PC-9 (cell line): ENCODE measurements at regions of chr1 and their contacts with region 1.

Region 1: DNA sequence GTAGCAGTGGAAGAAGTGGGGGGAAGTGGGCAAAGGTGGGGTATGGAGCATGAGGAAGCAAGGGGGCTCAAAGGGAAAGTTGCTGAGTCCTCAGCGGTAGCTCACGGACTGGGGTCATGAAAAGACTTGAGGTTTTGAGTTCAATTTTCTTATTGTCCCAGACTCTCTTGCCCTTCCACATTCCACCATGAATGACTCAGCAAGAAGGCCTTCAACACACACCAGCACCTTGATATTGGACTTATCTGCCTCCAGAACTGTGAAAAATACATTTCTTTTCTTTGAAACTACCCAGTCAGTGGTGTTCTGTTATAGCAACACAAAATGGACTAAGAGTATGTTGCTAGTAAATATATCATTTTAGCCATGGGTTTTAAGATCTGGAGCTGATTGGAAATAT is 17.3 kb upstream of the RHBDL2 start:
- DNase-seq: peak; percentile 71 to 92
- H3K4me3 ChIP-seq: peak overlapping the region; percentile 23; the same call in 1 of the 2 replicates
- H3K27ac ChIP-seq: peak overlapping the region; percentile 95
- H3K4me1 ChIP-seq: peaks cover 55% of the 10 kb centered on the region
- H3K27me3 ChIP-seq: no peaks in the 10 kb centered on the region
- CTCF ChIP-seq: no peak

Region 2: DNA sequence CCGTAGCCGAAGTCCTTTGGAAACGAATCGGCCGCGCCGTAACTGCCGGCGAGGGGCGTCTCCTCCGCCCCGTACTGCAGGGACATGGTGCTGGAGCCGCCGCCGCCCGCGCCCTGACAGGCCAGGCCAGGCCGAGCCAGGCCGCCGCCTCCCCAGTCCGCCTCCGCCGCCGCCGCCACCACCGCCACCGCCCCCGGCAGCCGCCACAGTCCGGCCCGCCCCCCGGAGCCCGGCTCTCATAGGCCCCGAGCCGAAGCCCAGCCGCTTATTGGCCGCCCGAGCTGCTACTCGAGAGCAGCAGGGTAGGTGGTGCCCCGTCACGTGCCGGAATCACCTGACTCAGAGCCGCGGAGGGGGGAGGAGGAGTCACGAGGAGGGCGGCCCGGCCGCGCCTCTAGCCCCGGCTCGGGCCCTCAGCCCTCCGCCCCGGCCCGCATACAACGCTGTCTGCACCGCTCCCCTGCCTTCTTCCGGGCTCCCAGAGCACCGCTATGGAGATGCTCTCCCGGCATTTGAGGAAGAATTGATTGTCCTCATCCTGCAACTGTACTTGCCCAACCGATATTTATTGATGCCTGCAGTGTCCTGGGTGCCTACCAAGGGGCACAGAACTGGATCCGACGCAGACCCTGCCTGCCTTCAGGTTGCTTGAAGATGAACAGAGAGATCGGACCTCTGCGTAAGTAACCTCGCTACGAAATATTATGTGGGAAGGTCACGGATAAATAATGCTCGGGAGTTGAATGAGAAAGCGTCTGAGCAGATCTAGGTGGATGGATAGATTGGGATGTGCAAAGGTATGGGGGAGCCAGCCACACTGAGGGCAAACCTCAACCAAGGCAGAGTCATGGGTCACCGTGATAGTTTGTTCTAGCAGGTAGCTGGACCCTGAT is 99.2 kb before region 1 on chr1 and contains the start of gene RRAGC:
- CTCF ChIA-PET with region 1: no interaction called
- POLR2A ChIA-PET with region 1: interaction called, 4 read pairs
- intact Hi-C with region 1: loop called (anchors 1 kb)
- DNase-seq: peak; percentile 92 to 100
- H3K4me3 ChIP-seq: peak within 1 kb of the TSS; percentile 72
- H3K27ac ChIP-seq: peak within 1 kb of the TSS; percentile 59
- H3K4me1 ChIP-seq: peaks cover 23% of the 10 kb centered on the region
- H3K27me3 ChIP-seq: no peaks in the 10 kb centered on the region
- CTCF ChIP-seq: no peak
- total RNA-seq, gene RRAGC: 22.1 and 33.0 TPM in 2 replicates

Region 3: GRCh38 chr1:38941527-38942019 is 17.4 kb before region 1 on chr1 and contains the start of gene RHBDL2:
- CTCF ChIA-PET with region 1: interaction called, 10 read pairs
- POLR2A ChIA-PET with region 1: interaction called, 3 read pairs
- intact Hi-C with region 1: loop called (anchors 2 kb)
- DNase-seq: peak; percentile 71 to 87
- H3K4me3 ChIP-seq: peak within 1 kb of the TSS; percentile 66
- H3K27ac ChIP-seq: no peak within 1 kb of the TSS
- H3K4me1 ChIP-seq: peaks cover 5% of the 10 kb centered on the region; the same call in 1 of the 2 replicates
- H3K27me3 ChIP-seq: no peaks in the 10 kb centered on the region
- CTCF ChIP-seq: no peak
- total RNA-seq, gene RHBDL2: 31.6 and 36.9 TPM in 2 replicates

Region 4: GRCh38 chr1:39026051-39026865 is 67.3 kb after region 1 on chr1 and contains the start of gene NDUFS5:
- CTCF ChIA-PET with region 1: interaction called, 5 read pairs
- POLR2A ChIA-PET with region 1: interaction called, 8 read pairs
- intact Hi-C with region 1: loop called (anchors 1 kb)
- DNase-seq: peak; percentile 83 to 89
- H3K4me3 ChIP-seq: peak within 1 kb of the TSS; percentile 86
- H3K27ac ChIP-seq: peak within 1 kb of the TSS; percentile 81
- H3K4me1 ChIP-seq: peaks cover 6% of the 10 kb centered on the region
- H3K27me3 ChIP-seq: no peaks in the 10 kb centered on the region
- CTCF ChIP-seq: no peak
- total RNA-seq, gene NDUFS5: 498 and 524 TPM in 2 replicates

Region 5: DNA sequence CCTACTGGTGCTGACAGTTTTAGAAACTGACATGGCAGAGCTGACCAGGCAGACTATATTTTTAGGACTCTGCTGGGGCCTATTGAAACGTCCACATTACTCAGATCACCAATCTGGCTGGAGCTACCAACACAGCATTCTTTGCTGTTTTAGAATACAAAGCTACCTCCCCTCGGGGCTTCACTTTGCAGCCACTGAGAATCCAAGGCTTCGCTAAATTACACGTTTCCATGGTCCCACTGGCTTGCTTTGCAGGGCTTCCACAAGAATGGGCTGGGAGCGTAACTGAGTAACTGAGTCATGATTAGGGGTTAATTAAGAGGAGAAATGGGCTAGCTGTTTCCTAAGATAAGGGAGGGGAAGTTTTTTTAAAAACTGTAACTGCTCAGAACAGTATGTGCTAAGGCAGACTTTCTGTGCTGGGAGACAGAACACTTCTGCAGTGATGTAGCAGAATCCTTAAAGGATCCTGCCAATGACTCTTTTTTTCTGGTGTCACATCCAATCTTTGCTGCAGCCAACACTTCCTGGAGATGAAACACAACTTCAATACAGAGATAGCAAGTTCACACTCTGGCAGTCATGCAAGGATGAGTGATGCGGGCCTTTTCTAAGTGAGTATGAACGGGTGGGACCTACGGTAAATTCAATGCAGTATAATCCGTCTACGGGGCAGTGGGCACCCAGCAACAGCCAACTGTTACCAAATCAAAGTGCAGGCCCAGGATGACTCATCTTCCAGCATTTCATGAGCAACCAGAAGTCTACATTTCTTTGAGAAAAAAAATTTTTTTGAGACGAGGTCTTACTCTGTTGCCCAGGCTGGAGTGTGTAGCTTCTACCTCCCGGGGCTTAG is 88.6 kb after region 1 on chr1:
- CTCF ChIA-PET with region 1: no interaction called
- POLR2A ChIA-PET with region 1: no interaction called
- intact Hi-C with region 1: no loop called
- DNase-seq: peak; percentile 38 to 39
- H3K4me3 ChIP-seq: no peak overlapping the region
- H3K27ac ChIP-seq: no peak overlapping the region
- H3K4me1 ChIP-seq: no peaks in the 10 kb centered on the region
- H3K27me3 ChIP-seq: no peaks in the 10 kb centered on the region
- CTCF ChIP-seq: no peak

Region 6: DNA sequence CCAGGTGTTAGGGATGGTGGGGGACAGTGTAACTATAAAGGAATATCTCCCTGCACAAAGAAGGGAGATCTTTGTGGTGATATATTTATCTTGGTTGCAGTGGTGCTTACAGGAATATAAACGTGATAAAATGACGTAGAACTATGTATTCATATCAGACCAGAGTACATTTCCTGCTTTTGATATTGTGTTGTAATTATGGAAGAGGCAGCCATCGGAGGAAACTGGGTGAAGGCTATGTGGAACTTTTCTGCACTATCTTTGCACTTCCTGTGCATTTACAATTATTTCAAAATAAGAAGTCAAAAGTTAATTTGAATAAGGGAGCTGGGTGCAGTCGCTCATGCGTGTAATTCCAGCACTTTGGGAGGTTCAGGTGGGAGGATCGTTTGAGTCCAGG is 104.8 kb after region 1 on chr1:
- CTCF ChIA-PET with region 1: no interaction called
- POLR2A ChIA-PET with region 1: no interaction called
- intact Hi-C with region 1: no loop called
- DNase-seq: no peak
- H3K4me3 ChIP-seq: no peak overlapping the region
- H3K27ac ChIP-seq: no peak overlapping the region
- H3K4me1 ChIP-seq: no peaks in the 10 kb centered on the region
- H3K27me3 ChIP-seq: no peaks in the 10 kb centered on the region
- CTCF ChIP-seq: no peak

Region 7: DNA sequence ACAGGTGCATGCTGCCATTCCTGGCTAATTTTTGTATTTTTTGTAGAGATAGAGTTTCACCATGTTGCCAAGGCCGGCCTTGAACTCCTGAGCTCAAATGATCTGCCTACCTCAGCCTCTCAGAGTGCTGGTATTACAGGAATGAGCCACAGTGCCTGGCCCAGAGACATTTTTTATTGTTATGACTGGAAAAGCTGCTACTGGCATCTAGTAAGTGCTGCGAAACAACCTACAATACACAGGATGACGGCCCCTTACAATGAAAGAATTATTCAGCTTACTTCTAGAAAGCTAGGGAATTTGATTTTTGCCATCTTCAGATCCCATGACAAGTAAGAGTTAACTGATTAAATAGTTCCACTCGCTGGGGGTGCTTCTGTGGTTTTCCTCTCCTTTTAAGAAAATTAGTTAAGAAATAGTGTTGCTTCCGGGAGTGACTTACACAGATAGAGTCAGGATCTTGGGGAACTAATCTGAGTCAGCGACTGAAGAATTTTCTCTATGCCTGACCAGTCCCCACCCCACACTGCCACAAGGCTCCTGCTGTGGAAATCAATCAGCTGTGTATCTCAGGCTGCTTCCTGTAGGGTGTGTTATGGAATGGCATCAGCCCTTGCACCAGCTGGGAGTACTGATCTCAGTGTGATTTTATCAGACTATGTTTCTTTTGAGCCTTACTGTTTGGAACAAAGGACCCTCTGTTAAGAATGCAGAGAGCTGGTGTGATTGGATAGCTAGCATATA is 439.5 kb after region 1 on chr1:
- CTCF ChIA-PET with region 1: no interaction called
- POLR2A ChIA-PET with region 1: no interaction called
- intact Hi-C with region 1: loop called (anchors 10 kb)
- DNase-seq: peak; percentile 91 to 100
- H3K4me3 ChIP-seq: peak overlapping the region; percentile 22; the same call in 1 of the 2 replicates
- H3K27ac ChIP-seq: peak overlapping the region; percentile 91
- H3K4me1 ChIP-seq: peaks cover 66% of the 10 kb centered on the region
- H3K27me3 ChIP-seq: no peaks in the 10 kb centered on the region
- CTCF ChIP-seq: no peak